H1 (cell line): ENCODE measurements at regions of chr14 and their contacts with region 1.

Region 1: GRCh38 chr14:55201224-55202050 is 10.1 kb upstream of the DLGAP5 start:
- DNase-seq: no peak
- H3K4me3 ChIP-seq: no peak overlapping the region; a peak in 1 of 8 replicates
- H3K27ac ChIP-seq: peak overlapping the region; percentile 9; the same call in 1 of the 2 replicates
- H3K4me1 ChIP-seq: peaks cover 0 to 8% (median 1%) of the 10 kb centered on the region in 4 experiments; a peak in 2 of 7 replicates
- H3K27me3 ChIP-seq: no peaks in the 10 kb centered on the region
- CTCF ChIP-seq: no peak; a peak in 1 of 4 replicates
- EP300 ChIP-seq: no peak
- POLR2A ChIP-seq: no peak
- RAD21 ChIP-seq: no peak

Region 2: GRCh38 chr14:55191203-55192053 is 10.0 kb before region 1 on chr14 and contains the start of gene DLGAP5:
- CTCF ChIA-PET with region 1: no interaction called
- POLR2A ChIA-PET with region 1: interaction called, 10 read pairs
- DNase-seq: peak; percentile 88 to 89
- H3K4me3 ChIP-seq: peak within 1 kb of the TSS; percentile 85 to 99 (median 88)
- H3K27ac ChIP-seq: peak within 1 kb of the TSS; percentile 40; the same call in 1 of the 2 replicates
- H3K4me1 ChIP-seq: peaks cover 0 to 6% (median 4%) of the 10 kb centered on the region in 4 experiments; a peak in 3 of 7 replicates
- H3K27me3 ChIP-seq: no peaks in the 10 kb centered on the region
- CTCF ChIP-seq: no peak
- EP300 ChIP-seq: no peak
- POLR2A ChIP-seq: peak; percentile 67 to 89
- RAD21 ChIP-seq: no peak
- total RNA-seq, gene DLGAP5: 150 and 155 TPM in 2 replicates

Region 3: DNA sequence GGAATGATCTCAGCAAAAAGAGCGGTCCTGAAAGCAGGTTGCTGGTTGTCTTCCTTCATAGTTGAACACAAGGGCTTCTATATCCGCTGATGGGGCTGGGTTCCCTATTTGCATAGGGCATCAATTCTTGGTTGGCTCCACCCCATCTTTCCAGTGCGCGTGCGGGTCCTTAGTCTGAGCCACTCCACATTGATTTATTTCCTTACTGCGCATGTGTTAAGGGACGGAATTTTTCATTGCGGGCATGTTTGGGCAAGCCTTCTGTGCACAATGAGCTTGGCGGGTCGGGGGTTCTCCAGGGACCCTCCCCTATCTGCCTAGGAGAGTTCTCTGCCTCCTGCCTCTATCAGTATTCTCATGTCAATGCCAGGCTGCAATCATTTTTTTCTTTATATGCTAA is 11.2 kb after region 1 on chr14:
- CTCF ChIA-PET with region 1: interaction called, 11 read pairs
- POLR2A ChIA-PET with region 1: interaction called, 3 read pairs
- DNase-seq: no peak
- H3K4me3 ChIP-seq: no peak overlapping the region
- H3K27ac ChIP-seq: peak overlapping the region; percentile 40; the same call in 1 of the 2 replicates
- H3K4me1 ChIP-seq: peaks cover 0 to 3% (median 0%) of the 10 kb centered on the region in 4 experiments; a peak in 1 of 7 replicates
- H3K27me3 ChIP-seq: no peaks in the 10 kb centered on the region
- CTCF ChIP-seq: no peak
- EP300 ChIP-seq: no peak
- POLR2A ChIP-seq: no peak
- RAD21 ChIP-seq: no peak